Ovary (tissue), 10 donors: ENCODE measurements at regions of chr5 and their contacts with region 1.

Region 1: DNA sequence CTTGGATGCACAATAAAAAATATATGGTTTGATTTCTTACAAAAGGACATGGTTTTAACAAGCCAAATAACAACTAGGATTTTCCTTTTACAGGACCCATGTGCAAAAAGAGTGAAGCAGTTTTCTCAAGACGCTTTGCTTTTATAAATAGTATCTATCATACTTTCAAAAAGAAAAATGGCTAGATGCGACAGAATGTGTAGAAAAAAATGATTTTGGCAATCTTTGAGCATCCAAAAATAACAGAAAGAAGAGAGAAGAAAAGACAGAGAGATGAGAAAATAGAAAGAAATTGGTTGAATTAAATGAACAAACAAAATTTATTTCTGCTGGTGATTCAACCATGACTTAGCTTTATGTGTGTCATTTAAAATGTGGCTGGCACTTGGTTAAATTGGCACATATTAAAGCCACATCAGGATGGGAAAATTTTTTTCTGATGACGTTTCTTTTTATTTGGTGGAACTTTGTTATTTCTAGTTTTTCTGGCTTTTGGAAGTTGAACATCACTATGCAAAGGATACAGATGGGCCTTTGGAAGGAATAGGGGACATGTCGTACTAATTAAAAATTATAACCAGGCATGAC is 35.6 kb upstream of the NREP start:
- DNase-seq: no peak
- H3K4me3 ChIP-seq: no peak overlapping the region
- H3K27ac ChIP-seq: no peak overlapping the region
- H3K4me1 ChIP-seq: no peaks in the 10 kb centered on the region
- H3K27me3 ChIP-seq: no peaks in the 10 kb centered on the region
- CTCF ChIP-seq: no peak
- EP300 ChIP-seq: no peak
- POLR2A ChIP-seq: no peak

Region 2: GRCh38 chr5:111848384-111848964 is 55.9 kb after region 1 on chr5:
- intact Hi-C with region 1: loop called in 1 of 4 experiments (anchors 2 kb)
- DNase-seq: no peak
- H3K4me3 ChIP-seq: no peak overlapping the region
- H3K27ac ChIP-seq: no peak overlapping the region
- H3K4me1 ChIP-seq: no peaks in the 10 kb centered on the region
- H3K27me3 ChIP-seq: no peaks in the 10 kb centered on the region
- CTCF ChIP-seq: no peak
- EP300 ChIP-seq: no peak
- POLR2A ChIP-seq: no peak

Region 3: GRCh38 chr5:111863801-111864200 is 71.2 kb after region 1 on chr5:
- intact Hi-C with region 1: no loop called
- DNase-seq: no peak
- H3K4me3 ChIP-seq: no peak overlapping the region
- H3K27ac ChIP-seq: no peak overlapping the region
- H3K4me1 ChIP-seq: no peaks in the 10 kb centered on the region
- H3K27me3 ChIP-seq: no peaks in the 10 kb centered on the region
- CTCF ChIP-seq: no peak
- EP300 ChIP-seq: no peak
- POLR2A ChIP-seq: no peak

Region 4: DNA sequence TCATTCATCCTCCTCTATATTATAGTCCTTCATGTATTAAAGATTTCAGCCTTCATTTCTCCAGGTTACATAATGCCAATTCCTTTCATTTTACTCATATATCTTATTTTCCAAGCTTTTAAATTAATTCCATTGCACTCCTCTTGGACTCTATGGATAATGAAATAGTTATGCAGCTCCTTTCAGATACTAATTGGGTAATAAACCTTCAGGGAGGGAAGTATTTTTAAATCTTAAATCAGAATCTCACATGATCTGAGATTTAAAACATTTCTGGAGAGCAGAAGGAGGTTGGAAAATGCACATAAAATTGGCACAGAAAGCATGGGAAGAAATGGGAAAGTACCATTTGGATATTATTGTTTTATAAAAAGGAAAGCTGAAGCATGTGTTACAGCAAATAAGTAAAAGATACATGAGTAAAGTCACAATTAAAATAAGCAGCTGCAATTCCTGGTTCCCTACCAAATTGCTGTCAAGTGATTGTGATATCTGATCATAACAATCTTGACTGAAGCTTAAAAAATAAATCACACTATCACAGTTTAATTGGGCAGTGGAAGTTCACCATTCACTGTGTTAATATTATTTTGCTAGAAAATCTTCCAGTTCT is 222.3 kb after region 1 on chr5:
- intact Hi-C with region 1: no loop called
- DNase-seq: no peak
- H3K4me3 ChIP-seq: no peak overlapping the region
- H3K27ac ChIP-seq: no peak overlapping the region
- H3K4me1 ChIP-seq: no peaks in the 10 kb centered on the region
- H3K27me3 ChIP-seq: no peaks in the 10 kb centered on the region
- CTCF ChIP-seq: no peak
- EP300 ChIP-seq: no peak
- POLR2A ChIP-seq: no peak